K562 (cell line): ENCODE measurements at regions of chrX and their contacts with region 1.

Region 1: GRCh38 chrX:13653022-13653693 is at the start of gene TCEANC:
- DNase-seq: peak; percentile 92 to 97 (median 93)
- ATAC-seq: peak; percentile 97
- H3K4me3 ChIP-seq: peak within 1 kb of the TSS; percentile 67
- H3K27ac ChIP-seq: peak within 1 kb of the TSS; percentile 82
- H3K4me1 ChIP-seq: peaks cover 8 to 37% of the 10 kb centered on the region in 2 experiments
- H3K27me3 ChIP-seq: no peaks in the 10 kb centered on the region
- CTCF ChIP-seq: no peak
- EP300 ChIP-seq: no peak
- POLR2A ChIP-seq: peak; percentile 86
- RAD21 ChIP-seq: no peak
- polyA plus RNA-seq, gene TCEANC: 2.0 to 2.3 TPM

Region 2: DNA sequence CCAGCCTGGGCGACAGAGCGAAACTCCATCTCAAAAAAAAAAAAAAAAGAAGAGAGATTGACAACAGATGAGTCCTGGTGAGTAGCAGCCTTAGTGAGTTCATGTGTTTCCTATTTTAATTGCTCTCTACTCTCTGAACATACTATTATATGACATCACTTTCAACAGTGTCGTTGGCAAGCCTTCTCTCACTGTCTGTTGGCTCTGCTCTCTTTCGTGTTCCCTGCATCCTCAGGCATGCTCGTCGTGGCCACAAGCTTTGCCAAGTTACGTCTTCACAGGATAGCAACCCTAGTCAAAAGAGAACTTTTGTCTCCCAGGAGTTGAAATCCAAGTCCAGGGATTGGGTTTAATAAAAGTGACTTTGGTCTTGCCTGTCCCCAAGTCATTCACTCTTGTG is 200.9 kb before region 1 on chrX:
- CTCF ChIA-PET with region 1: no interaction called
- POLR2A ChIA-PET with region 1: no interaction called
- in situ Hi-C with region 1: no loop called
- intact Hi-C with region 1: no loop called
- DNase-seq: no peak
- ATAC-seq: no peak
- H3K4me3 ChIP-seq: no peak overlapping the region
- H3K27ac ChIP-seq: no peak overlapping the region
- H3K4me1 ChIP-seq: no peaks in the 10 kb centered on the region
- H3K27me3 ChIP-seq: peaks cover 0 to 11% of the 10 kb centered on the region in 2 experiments; a peak in 3 of 5 replicates
- CTCF ChIP-seq: no peak
- EP300 ChIP-seq: no peak
- POLR2A ChIP-seq: no peak
- RAD21 ChIP-seq: no peak

Region 3: DNA sequence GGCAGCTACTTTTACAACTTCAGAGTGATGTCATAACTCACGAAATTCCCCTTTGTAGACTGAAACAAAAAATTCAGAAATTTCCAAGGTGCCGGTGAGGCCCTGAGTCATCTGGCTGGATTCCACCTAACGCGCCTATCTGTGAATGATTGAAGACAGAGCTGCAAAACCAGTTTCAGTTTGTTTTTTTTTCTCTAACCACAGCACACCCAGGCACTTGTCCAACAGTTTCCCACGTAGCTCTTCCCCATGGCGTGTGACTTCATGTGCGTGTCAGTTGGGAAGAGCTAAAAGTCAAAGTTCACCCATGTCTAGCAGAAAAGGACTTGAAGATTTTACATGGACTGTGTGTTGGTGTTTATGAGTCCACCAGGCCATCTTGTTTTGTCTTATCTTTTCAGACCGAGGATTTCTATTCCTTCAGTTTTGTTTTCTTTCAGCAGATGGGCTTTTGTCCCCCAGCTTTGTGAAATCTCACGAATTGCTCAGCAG is 16.1 kb after region 1 on chrX:
- CTCF ChIA-PET with region 1: no interaction called
- POLR2A ChIA-PET with region 1: interaction called, 3 read pairs
- in situ Hi-C with region 1: no loop called
- intact Hi-C with region 1: loop called (anchors 1 kb)
- DNase-seq: peak; percentile 47 to 78 (median 56)
- ATAC-seq: peak; percentile 93
- H3K4me3 ChIP-seq: peak overlapping the region; percentile 18; the same call in 1 of the 2 replicates
- H3K27ac ChIP-seq: peak overlapping the region; percentile 91
- H3K4me1 ChIP-seq: peaks cover 0 to 3% of the 10 kb centered on the region in 2 experiments; a peak in 3 of 5 replicates
- H3K27me3 ChIP-seq: no peaks in the 10 kb centered on the region
- CTCF ChIP-seq: no peak
- EP300 ChIP-seq: no peak
- POLR2A ChIP-seq: no peak
- RAD21 ChIP-seq: no peak

Region 4: GRCh38 chrX:13734278-13735172 is 81.4 kb after region 1 on chrX and contains the starts of genes OFD1 and TRAPPC2:
- CTCF ChIA-PET with region 1: no interaction called
- POLR2A ChIA-PET with region 1: no interaction called
- in situ Hi-C with region 1: no loop called
- intact Hi-C with region 1: loop called (anchors 2 kb)
- DNase-seq: peak; percentile 89 to 97 (median 92)
- ATAC-seq: peak; percentile 95
- H3K4me3 ChIP-seq: peak within 1 kb of the TSS; percentile 94
- H3K27ac ChIP-seq: peak within 1 kb of the TSS; percentile 96
- H3K4me1 ChIP-seq: peaks cover 5 to 15% of the 10 kb centered on the region in 2 experiments; a peak in 4 of 5 replicates
- H3K27me3 ChIP-seq: no peaks in the 10 kb centered on the region
- CTCF ChIP-seq: peak in 1 of 3 experiments; percentile 30; a peak in 2 of 6 replicates
- EP300 ChIP-seq: no peak
- POLR2A ChIP-seq: peak; percentile 94
- RAD21 ChIP-seq: no peak
- polyA plus RNA-seq, gene OFD1: 22.0 to 49.1 TPM
- polyA plus RNA-seq, gene TRAPPC2: 18.0 to 30.6 TPM

Region 5: GRCh38 chrX:13750204-13750603 is 97.0 kb after region 1 on chrX:
- CTCF ChIA-PET with region 1: interaction called, 19 read pairs
- POLR2A ChIA-PET with region 1: no interaction called
- in situ Hi-C with region 1: loop called (anchors 5 kb)
- intact Hi-C with region 1: loop called (anchors 1 kb)
- DNase-seq: peak in 2 of 4 experiments; percentile 25 to 51
- ATAC-seq: peak; percentile 85
- H3K4me3 ChIP-seq: no peak overlapping the region
- H3K27ac ChIP-seq: no peak overlapping the region
- H3K4me1 ChIP-seq: no peaks in the 10 kb centered on the region
- H3K27me3 ChIP-seq: no peaks in the 10 kb centered on the region
- CTCF ChIP-seq: peak; percentile 23 to 62 (median 61); a peak in 5 of 6 replicates
- EP300 ChIP-seq: no peak
- POLR2A ChIP-seq: no peak
- RAD21 ChIP-seq: peak in 1 of 2 experiments; percentile 51; a peak in 2 of 4 replicates